GM23248 (cell line): ENCODE measurements at regions of chr4 and their contacts with region 1.

Region 1: GRCh38 chr4:155854597-155855226 is 11.4 kb downstream of the ASIC5 start:
- DNase-seq: peak; percentile 65
- H3K4me3 ChIP-seq: peak overlapping the region; percentile 32; the same call in 1 of the 2 replicates
- H3K27ac ChIP-seq: peak overlapping the region; percentile 12; the same call in 1 of the 2 replicates
- H3K4me1 ChIP-seq: no peaks in the 10 kb centered on the region
- H3K27me3 ChIP-seq: no peaks in the 10 kb centered on the region

Region 2: GRCh38 chr4:155758481-155759404 is 96.0 kb before region 1 on chr4 and contains the start of gene GUCY1B1:
- in situ Hi-C with region 1: loop called (anchors 25 kb)
- DNase-seq: peak; percentile 91
- H3K4me3 ChIP-seq: peak within 1 kb of the TSS; percentile 74
- H3K27ac ChIP-seq: no peak within 1 kb of the TSS
- H3K4me1 ChIP-seq: no peaks in the 10 kb centered on the region
- H3K27me3 ChIP-seq: no peaks in the 10 kb centered on the region
- total RNA-seq, gene GUCY1B1: 0.25 and 2.1 TPM in 2 replicates